ENCODE measurements at regions of chr6 and their contacts with region 1.

Region 1: GRCh38 chr6:22575190-22575589 is 5.8 kb downstream of the HDGFL1 start:
- DNase-seq: no peak
- H3K4me3 ChIP-seq: no peak overlapping the region
- H3K27ac ChIP-seq: no peak overlapping the region
- H3K4me1 ChIP-seq: no peaks in the 10 kb centered on the region
- H3K27me3 ChIP-seq: no peaks in the 10 kb centered on the region
- CTCF ChIP-seq: no peak
- EP300 ChIP-seq: no peak
- POLR2A ChIP-seq: no peak

Region 2: GRCh38 chr6:20817806-20818320 is 1757.3 kb before region 1 on chr6:
- in situ Hi-C with region 1: no loop called
- intact Hi-C with region 1: loop called (anchors 5 kb)
- DNase-seq: no peak
- H3K4me3 ChIP-seq: no peak overlapping the region
- H3K27ac ChIP-seq: no peak overlapping the region
- H3K4me1 ChIP-seq: no peaks in the 10 kb centered on the region
- H3K27me3 ChIP-seq: no peaks in the 10 kb centered on the region
- CTCF ChIP-seq: no peak
- EP300 ChIP-seq: no peak
- POLR2A ChIP-seq: no peak

Region 3: DNA sequence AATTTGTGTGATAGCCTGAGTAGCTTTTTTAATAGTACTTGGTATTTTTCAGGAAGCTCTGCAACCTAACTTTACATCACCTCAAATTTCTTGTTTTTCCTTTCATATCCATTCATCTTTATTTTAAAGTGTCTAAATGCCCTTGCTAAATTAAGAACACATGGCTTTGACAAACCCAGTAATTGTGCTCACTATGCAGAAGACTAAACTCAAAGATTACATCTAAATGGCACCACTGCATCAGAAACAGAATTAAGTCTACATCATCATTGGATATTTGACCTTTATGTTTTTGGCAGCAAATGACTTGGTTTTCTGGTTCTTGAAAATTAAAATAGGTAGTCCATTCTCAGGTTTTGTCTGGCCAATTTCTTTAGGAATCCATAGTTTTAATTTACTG is 75.4 kb before region 1 on chr6:
- in situ Hi-C with region 1: no loop called
- intact Hi-C with region 1: no loop called
- DNase-seq: no peak
- H3K4me3 ChIP-seq: no peak overlapping the region
- H3K27ac ChIP-seq: no peak overlapping the region
- H3K4me1 ChIP-seq: no peaks in the 10 kb centered on the region
- H3K27me3 ChIP-seq: no peaks in the 10 kb centered on the region
- CTCF ChIP-seq: no peak
- EP300 ChIP-seq: no peak
- POLR2A ChIP-seq: no peak